IMR-90 (cell line): ENCODE measurements at regions of chr10 and their contacts with region 1.

Region 1: DNA sequence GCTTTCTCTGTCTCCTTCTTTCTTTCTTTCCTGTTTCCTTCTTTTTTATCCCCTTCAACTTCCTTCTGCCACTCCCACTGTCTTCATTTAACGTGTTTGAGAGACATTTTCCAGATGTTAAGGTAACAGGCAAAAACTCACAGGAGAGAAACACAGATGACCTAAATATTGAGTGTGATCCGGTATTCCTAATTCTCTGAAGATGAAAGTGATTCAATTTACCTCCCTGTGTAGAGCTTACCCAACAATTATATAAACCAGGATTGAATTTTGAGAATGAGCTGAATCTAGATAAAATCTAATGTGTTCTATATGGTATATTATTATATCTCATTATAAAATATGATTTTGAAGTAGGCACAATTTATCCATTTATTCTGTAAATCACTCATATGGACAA is 46.5 kb upstream of the RSU1 start:
- DNase-seq: no peak
- ATAC-seq: no peak
- H3K4me3 ChIP-seq: no peak overlapping the region
- H3K27ac ChIP-seq: no peak overlapping the region
- H3K4me1 ChIP-seq: peaks cover 3% of the 10 kb centered on the region
- H3K27me3 ChIP-seq: no peaks in the 10 kb centered on the region
- CTCF ChIP-seq: no peak
- POLR2A ChIP-seq: no peak
- RAD21 ChIP-seq: no peak

Region 2: DNA sequence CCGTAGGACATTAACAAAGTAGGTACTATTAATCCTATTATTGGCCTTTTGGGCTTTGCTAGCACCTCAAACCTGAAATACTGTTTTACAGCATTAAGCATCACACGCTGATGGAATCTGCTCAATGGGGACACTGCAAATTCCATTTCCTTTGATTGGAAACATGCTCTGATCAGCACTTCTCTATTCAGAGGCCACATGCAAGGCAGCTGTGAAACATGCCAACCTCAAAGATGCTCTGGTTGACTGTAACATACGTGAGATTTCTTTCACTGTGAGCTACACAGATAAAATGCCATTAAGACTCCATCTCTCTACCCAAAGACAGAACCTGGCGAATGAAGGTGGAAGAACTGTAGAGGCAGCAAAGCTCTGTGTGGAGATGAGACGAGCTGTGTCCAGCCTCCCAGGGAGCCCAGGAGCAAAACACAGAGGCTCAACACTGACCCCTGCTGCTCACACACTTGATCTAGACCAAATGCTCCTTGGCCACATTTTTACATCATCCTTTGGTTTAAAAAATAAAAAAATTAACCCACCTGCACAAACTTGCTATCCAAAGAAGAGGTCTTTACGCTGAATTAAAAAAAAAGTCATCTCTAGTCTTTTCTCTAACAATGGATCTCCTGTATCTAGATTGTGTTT is 54.6 kb before region 1 on chr10:
- CTCF ChIA-PET with region 1: no interaction called
- POLR2A ChIA-PET with region 1: no interaction called
- dilution Hi-C with region 1: no loop called
- in situ Hi-C with region 1: no loop called
- intact Hi-C with region 1: no loop called
- DNase-seq: peak; percentile 36
- ATAC-seq: peak; percentile 81
- H3K4me3 ChIP-seq: no peak overlapping the region
- H3K27ac ChIP-seq: no peak overlapping the region
- H3K4me1 ChIP-seq: no peaks in the 10 kb centered on the region
- H3K27me3 ChIP-seq: no peaks in the 10 kb centered on the region
- CTCF ChIP-seq: peak; percentile 63
- POLR2A ChIP-seq: no peak
- RAD21 ChIP-seq: peak; percentile 56

Region 3: GRCh38 chr10:17464545-17464944 is 600.8 kb after region 1 on chr10:
- CTCF ChIA-PET with region 1: no interaction called
- POLR2A ChIA-PET with region 1: interaction called, 22 read pairs
- dilution Hi-C with region 1: no loop called
- in situ Hi-C with region 1: no loop called
- intact Hi-C with region 1: no loop called
- DNase-seq: no peak
- ATAC-seq: no peak
- H3K4me3 ChIP-seq: no peak overlapping the region
- H3K27ac ChIP-seq: no peak overlapping the region
- H3K4me1 ChIP-seq: no peaks in the 10 kb centered on the region
- H3K27me3 ChIP-seq: peaks cover 3% of the 10 kb centered on the region; the same call in 1 of the 2 replicates
- CTCF ChIP-seq: no peak
- POLR2A ChIP-seq: no peak
- RAD21 ChIP-seq: no peak